Mammary epithelial cell (primary cell): ENCODE measurements at regions of chr7 and their contacts with region 1.

Region 1: DNA sequence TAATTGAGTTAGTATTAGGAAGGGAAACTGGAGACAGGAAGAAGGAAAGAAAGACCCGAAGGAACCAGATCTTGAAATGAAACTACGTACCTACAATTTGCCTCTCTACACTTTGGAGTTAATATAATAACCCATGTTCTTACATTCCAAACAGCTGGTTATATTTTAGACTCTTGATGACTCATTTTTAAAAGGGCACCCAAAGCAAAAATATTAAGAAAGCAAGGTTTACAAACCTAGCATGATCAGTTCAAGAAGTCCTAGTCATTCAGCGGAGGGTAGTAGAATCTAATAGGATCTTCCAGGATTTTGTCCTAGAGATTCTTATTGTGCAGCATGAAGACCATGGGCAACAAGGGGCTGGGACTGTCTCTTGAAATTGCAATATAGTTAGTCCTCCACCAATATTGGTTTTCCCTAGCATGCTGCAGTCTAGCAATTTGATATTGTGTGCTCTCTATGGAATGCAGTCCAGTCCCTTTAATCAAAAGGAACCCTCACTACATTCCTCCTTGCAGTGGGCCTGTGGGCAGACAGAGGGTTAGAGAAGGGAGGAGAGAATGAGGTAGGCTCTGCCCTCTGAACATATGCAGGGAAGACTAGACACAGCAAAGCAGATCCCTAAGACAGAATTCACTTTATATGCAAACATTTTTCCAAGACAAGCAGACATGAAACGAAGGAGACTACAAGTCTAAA is 230.3 kb downstream of the INHBA start:
- DNase-seq: no peak
- H3K4me3 ChIP-seq: no peak overlapping the region
- H3K27ac ChIP-seq: no peak overlapping the region
- H3K4me1 ChIP-seq: no peaks in the 10 kb centered on the region
- H3K27me3 ChIP-seq: no peaks in the 10 kb centered on the region
- CTCF ChIP-seq: no peak

Region 2: DNA sequence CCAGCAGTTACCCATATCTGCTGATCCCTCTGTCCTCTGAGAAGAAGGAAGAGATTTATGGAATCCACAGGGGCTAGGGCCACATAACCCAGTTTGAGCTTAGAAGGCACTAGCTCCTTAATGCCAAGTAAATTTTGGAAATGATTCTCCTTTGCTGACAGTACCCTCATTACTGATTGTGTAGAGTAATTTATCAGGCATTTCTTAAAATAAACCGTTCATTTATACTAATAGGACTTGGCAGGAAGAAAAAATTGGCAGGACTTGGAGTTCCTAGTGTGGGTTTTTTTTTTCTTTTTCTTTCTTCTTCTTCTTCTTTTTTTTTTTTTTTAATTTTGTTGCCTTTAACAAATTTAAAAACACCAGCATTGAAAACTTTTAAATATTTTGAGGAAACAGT is 692.1 kb before region 1 on chr7:
- CTCF ChIA-PET with region 1: no interaction called
- dilution Hi-C with region 1: no loop called
- in situ Hi-C with region 1: no loop called
- intact Hi-C with region 1: no loop called
- DNase-seq: no peak
- H3K4me3 ChIP-seq: no peak overlapping the region
- H3K27ac ChIP-seq: no peak overlapping the region
- H3K4me1 ChIP-seq: no peaks in the 10 kb centered on the region
- H3K27me3 ChIP-seq: no peaks in the 10 kb centered on the region
- CTCF ChIP-seq: no peak

Region 3: DNA sequence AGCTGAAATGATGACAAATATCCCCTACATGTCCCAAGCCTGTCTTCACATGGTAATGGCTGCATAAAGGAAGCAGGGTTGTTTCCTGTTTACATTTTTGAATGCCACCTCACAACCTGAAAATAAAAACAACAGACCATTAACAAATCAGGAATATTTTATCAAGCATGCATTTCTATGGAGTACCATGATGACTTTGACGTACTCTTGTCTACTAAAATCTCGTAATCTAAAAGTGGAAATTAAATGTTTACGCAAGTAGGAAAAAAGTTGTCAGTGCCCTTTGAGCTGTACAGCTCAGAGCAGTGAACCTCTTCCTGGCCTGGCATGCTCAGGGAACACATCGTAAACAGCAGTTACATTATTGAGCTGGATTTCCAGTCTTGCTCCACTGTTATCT is 36.2 kb after region 1 on chr7:
- CTCF ChIA-PET with region 1: no interaction called
- dilution Hi-C with region 1: loop called (anchors 5 kb)
- in situ Hi-C with region 1: no loop called
- intact Hi-C with region 1: no loop called
- DNase-seq: no peak
- H3K4me3 ChIP-seq: no peak overlapping the region
- H3K27ac ChIP-seq: no peak overlapping the region
- H3K4me1 ChIP-seq: no peaks in the 10 kb centered on the region
- H3K27me3 ChIP-seq: no peaks in the 10 kb centered on the region
- CTCF ChIP-seq: no peak

Region 4: DNA sequence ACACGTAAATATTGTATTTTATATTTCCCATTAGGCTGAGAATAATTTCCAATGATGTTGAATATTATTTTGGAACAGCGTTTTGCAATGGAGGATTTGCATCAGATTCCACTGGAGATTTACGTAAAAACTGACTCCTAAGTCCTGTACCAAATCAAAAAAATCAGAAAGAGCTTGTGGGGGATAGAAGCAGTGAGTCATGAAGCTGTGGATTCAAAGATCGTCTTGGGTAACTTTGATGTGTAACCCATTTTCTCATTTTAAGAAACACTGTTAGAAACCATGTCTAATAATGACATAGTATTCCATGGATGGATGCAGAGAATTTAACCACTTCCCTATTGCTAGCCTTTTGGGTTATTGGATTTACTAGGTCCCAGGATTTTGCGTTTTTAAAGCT is 71.7 kb after region 1 on chr7:
- CTCF ChIA-PET with region 1: no interaction called
- dilution Hi-C with region 1: no loop called
- in situ Hi-C with region 1: no loop called
- intact Hi-C with region 1: no loop called
- DNase-seq: no peak
- H3K4me3 ChIP-seq: no peak overlapping the region
- H3K27ac ChIP-seq: no peak overlapping the region
- H3K4me1 ChIP-seq: no peaks in the 10 kb centered on the region
- H3K27me3 ChIP-seq: no peaks in the 10 kb centered on the region
- CTCF ChIP-seq: no peak